ENCODE measurements at regions of chrX and their contacts with region 1.

Region 1: GRCh38 chrX:80808160-80808735 is 1.4 kb downstream of the BRWD3 start:
- DNase-seq: peak; percentile 82 to 87 (median 86)
- H3K4me3 ChIP-seq: peak overlapping the region; percentile 59 to 89 (median 74)
- H3K4me3 Mint-ChIP-seq: peak overlapping the region; percentile 84 to 91
- H3K27ac ChIP-seq: peak overlapping the region; percentile 81 to 84
- H3K27ac Mint-ChIP-seq: peak overlapping the region; percentile 93 to 98 (median 95)
- H3K4me1 ChIP-seq: peaks cover 11 to 21% of the 10 kb centered on the region in 2 donors
- H3K4me1 Mint-ChIP-seq: peaks cover 18% of the 10 kb centered on the region
- H3K27me3 ChIP-seq: no peaks in the 10 kb centered on the region
- H3K27me3 Mint-ChIP-seq: peaks cover 0 to 6% (median 0%) of the 10 kb centered on the region in 3 donors
- CTCF ChIP-seq: no peak

Region 2: GRCh38 chrX:80747832-80748231 is 60.4 kb before region 1 on chrX:
- intact Hi-C with region 1: no loop called
- DNase-seq: no peak
- H3K4me3 ChIP-seq: no peak overlapping the region
- H3K4me3 Mint-ChIP-seq: no peak overlapping the region
- H3K27ac ChIP-seq: no peak overlapping the region
- H3K27ac Mint-ChIP-seq: no peak overlapping the region
- H3K4me1 ChIP-seq: no peaks in the 10 kb centered on the region
- H3K4me1 Mint-ChIP-seq: no peaks in the 10 kb centered on the region
- H3K27me3 ChIP-seq: no peaks in the 10 kb centered on the region
- H3K27me3 Mint-ChIP-seq: peaks cover 0 to 1% (median 0%) of the 10 kb centered on the region in 3 donors
- CTCF ChIP-seq: no peak

Region 3: DNA sequence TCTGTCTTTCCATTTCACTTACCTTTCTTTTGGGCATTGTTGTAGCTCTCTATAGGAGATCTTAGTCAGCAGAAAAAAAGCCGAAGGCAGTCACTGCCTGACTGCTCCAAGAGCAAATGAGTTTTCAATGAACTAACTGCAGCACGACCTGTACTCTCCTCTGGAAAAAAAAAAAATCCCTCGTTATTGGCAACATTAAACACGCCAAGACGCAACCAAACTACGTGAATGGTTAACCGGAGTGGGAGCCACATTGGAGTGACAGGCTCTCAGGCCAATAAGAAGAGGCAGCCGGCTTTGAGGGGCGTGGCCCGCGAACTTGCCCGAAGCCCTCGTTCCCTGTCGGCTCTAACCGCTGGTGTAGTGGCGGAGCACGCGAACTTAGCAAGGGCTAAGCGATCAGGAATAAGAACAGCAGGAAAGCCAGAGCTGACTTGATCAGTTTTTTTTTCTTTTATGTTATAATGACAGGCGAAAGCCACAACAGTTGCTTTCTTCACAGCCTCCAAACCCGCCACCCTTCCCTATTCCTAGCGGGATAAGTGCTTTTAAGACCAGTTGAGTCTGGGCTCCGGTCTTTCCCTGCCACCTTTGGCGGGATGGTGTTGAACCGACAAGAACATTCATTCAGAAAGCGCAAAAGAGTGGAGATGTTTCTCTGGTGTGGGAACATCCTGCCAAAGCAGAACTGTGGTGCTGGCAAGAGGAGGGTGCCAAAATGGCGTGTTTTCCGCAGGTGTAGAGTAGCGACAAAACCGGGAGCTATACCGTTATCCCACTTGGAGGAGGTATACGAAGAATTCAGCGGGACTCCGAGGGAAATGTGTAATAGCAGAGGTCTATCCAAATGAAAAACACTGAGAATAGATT is 313.5 kb after region 1 on chrX:
- intact Hi-C with region 1: loop called in 1 of 2 experiments (anchors 10 kb)
- DNase-seq: peak; percentile 80 to 84 (median 84)
- H3K4me3 ChIP-seq: peak overlapping the region; percentile 52 to 86 (median 79)
- H3K4me3 Mint-ChIP-seq: peak overlapping the region; percentile 91 to 97
- H3K27ac ChIP-seq: peak overlapping the region in 1 of 2 donors; percentile 25
- H3K27ac Mint-ChIP-seq: peak overlapping the region in 4 of 7 donors; percentile 42 to 74 (median 70)
- H3K4me1 ChIP-seq: peaks cover 14 to 16% of the 10 kb centered on the region in 2 donors
- H3K4me1 Mint-ChIP-seq: peaks cover 18% of the 10 kb centered on the region
- H3K27me3 ChIP-seq: peaks cover 15 to 17% of the 10 kb centered on the region in 2 donors
- H3K27me3 Mint-ChIP-seq: peaks cover 6 to 16% (median 11%) of the 10 kb centered on the region in 3 donors
- CTCF ChIP-seq: no peak

Region 4: GRCh38 chrX:81280148-81280547 is 471.9 kb after region 1 on chrX:
- intact Hi-C with region 1: no loop called
- DNase-seq: no peak
- H3K4me3 ChIP-seq: no peak overlapping the region
- H3K4me3 Mint-ChIP-seq: no peak overlapping the region
- H3K27ac ChIP-seq: no peak overlapping the region
- H3K27ac Mint-ChIP-seq: peak overlapping the region in 1 of 7 donors; percentile 18
- H3K4me1 ChIP-seq: no peaks in the 10 kb centered on the region
- H3K4me1 Mint-ChIP-seq: no peaks in the 10 kb centered on the region
- H3K27me3 ChIP-seq: no peaks in the 10 kb centered on the region
- H3K27me3 Mint-ChIP-seq: no peaks in the 10 kb centered on the region
- CTCF ChIP-seq: no peak